Naive thymus-derived CD8-positive, alpha-beta T cell (primary cell): ENCODE measurements at regions of chr16 and their contacts with region 1.

Region 1: GRCh38 chr16:4330277-4330874 is 14.5 kb downstream of the GLIS2 start:
- DNase-seq: peak; percentile 32 to 82 (median 66)
- ATAC-seq: peak; percentile 56 to 70
- H3K4me3 Mint-ChIP-seq: no peak overlapping the region
- H3K27ac Mint-ChIP-seq: no peak overlapping the region
- H3K4me1 Mint-ChIP-seq: peaks cover 2 to 12% (median 7%) of the 10 kb centered on the region in 4 donors
- H3K27me3 Mint-ChIP-seq: no peaks in the 10 kb centered on the region

Region 2: GRCh38 chr16:4288148-4288921 is 42.0 kb before region 1 on chr16:
- POLR2A ChIA-PET with region 1: interaction called, 10 read pairs
- DNase-seq: peak; percentile 67 to 92 (median 81)
- ATAC-seq: peak; percentile 99
- H3K4me3 Mint-ChIP-seq: peak overlapping the region in 1 of 10 donors; percentile 8
- H3K27ac Mint-ChIP-seq: peak overlapping the region in 2 of 10 donors; percentile 34 to 53
- H3K4me1 Mint-ChIP-seq: peaks cover 9 to 20% (median 11%) of the 10 kb centered on the region in 4 donors
- H3K27me3 Mint-ChIP-seq: peaks cover 11 to 28% (median 14%) of the 10 kb centered on the region in 5 donors

Region 3: GRCh38 chr16:4307215-4308037 is 22.9 kb before region 1 on chr16:
- POLR2A ChIA-PET with region 1: interaction called, 31 read pairs
- DNase-seq: peak; percentile 90 to 98 (median 98)
- ATAC-seq: peak; percentile 89 to 92
- H3K4me3 Mint-ChIP-seq: peak overlapping the region; percentile 88 to 95 (median 92)
- H3K27ac Mint-ChIP-seq: peak overlapping the region; percentile 93 to 99 (median 96)
- H3K4me1 Mint-ChIP-seq: peaks cover 11 to 35% (median 28%) of the 10 kb centered on the region in 4 donors
- H3K27me3 Mint-ChIP-seq: peaks cover 0 to under 1% (median 0%) of the 10 kb centered on the region in 5 donors

Region 4: DNA sequence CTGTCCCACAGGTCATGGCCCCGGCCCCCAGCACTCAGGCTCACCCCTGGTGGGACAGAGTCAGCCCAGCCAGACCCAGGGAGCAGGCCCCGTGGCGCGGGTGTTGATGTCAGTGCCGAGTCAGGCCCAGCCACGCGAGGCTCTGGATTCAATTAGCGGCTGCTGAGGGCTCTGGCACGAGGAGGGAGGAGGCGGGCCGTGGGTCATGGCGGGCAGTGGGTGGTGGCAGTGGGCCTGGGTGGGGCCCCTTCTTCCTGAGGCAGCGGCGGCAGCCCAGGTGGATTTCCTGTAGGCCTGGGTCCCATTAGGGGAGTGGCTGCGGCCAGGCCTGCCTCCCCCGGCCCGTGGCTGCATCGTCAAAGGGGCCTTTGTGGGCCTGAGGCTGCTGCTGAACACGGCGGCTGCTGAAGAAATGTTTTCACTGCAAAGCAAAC is 54.1 kb after region 1 on chr16:
- POLR2A ChIA-PET with region 1: no interaction called
- DNase-seq: no peak
- ATAC-seq: no peak
- H3K4me3 Mint-ChIP-seq: no peak overlapping the region
- H3K27ac Mint-ChIP-seq: no peak overlapping the region
- H3K4me1 Mint-ChIP-seq: peaks cover 0 to 5% (median 3%) of the 10 kb centered on the region in 4 donors
- H3K27me3 Mint-ChIP-seq: no peaks in the 10 kb centered on the region